Ascending aorta (tissue), 2 donors: ENCODE measurements at regions of chr15 and their contacts with region 1.

Region 1: DNA sequence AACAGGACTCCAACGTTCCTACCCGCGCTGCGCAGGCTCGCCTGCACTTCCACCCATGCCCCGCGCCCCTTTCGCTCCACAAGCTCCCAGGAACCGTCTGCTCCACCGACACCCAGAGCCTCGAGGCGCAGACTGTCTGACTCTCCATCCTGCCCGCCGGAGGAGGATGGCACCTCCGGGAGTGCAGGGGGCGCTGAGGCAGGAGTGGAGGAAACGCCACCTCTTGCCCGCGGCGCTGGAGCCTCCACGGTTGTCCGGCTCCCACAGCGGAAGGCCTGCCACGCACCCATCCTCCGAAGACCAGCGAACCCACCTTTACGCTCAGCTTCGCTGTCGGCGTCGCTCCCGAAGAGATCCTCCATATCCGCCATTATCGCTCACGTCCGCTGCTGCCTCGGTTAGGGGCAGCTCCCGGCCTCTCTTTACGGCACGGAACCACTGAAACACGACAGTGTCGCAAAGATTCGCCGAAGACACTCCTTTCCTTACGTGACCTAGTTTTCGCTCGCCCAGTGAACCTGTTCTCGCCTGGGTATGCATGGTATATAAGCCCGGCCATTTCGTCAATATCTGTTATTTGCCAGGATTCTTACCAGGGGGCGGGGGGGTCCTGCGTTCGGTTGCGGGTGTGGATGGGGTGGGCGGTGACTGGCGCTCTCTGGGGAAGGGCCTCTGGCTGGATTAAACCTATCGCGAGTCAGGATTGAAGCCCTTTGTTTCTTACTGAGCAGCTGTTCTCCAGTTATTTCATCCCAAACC is at the start of gene LEO1:
- DNase-seq: peak; percentile 63 to 95
- H3K4me3 ChIP-seq: peak within 1 kb of the TSS; percentile 69 to 84
- H3K27ac ChIP-seq: peak within 1 kb of the TSS; percentile 78 to 90
- H3K4me1 ChIP-seq: peaks cover 0 to 5% of the 10 kb centered on the region in 2 donors
- H3K27me3 ChIP-seq: no peaks in the 10 kb centered on the region
- CTCF ChIP-seq: peak in 2 of 3 experiments; percentile 48 to 56
- total RNA-seq, gene LEO1: 1.8 TPM

Region 2: DNA sequence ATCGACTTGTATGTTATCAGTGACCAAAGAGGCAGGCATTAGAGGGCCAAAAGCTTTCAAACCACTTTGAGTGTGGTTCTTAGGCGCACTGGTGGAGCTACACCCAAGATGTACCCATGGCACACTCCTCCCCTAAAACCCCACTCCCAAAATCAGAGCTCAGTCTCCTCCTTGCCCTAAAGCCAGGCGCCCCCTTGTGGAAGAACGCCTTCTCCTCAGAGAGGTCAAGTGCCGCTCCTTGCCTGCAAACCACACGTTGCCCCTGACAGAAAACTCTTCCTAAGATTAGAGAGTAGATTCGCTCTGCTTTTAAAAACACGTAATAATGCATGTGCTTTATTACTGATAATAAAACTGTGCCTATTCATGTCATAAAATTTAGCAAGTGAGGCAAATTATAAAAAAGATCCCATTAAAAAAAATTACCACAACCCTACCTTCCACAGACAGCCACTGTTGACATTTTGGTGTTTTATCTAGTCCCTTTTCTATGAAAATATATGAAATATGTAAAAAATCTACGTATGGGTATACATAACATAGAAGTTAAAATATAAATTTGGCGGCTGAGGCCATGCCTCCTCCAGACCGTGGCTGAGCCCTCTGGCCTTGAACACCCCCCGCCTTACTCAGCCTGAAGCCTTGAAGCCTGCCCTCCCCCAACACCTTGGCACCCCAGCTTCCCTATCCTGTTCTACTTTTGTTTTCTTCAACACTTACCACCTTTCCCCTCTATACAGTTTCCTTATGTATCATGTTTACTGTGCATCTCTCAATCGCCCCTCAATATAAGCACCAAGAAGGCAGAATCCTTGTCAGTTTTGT is 107.5 kb after region 1 on chr15:
- intact Hi-C with region 1: loop called (anchors 5 kb)
- DNase-seq: peak in 1 of 2 donors; percentile 82
- H3K4me3 ChIP-seq: no peak overlapping the region
- H3K27ac ChIP-seq: no peak overlapping the region
- H3K4me1 ChIP-seq: no peaks in the 10 kb centered on the region
- H3K27me3 ChIP-seq: no peaks in the 10 kb centered on the region
- CTCF ChIP-seq: peak; percentile 52 to 81 (median 62)

Region 3: DNA sequence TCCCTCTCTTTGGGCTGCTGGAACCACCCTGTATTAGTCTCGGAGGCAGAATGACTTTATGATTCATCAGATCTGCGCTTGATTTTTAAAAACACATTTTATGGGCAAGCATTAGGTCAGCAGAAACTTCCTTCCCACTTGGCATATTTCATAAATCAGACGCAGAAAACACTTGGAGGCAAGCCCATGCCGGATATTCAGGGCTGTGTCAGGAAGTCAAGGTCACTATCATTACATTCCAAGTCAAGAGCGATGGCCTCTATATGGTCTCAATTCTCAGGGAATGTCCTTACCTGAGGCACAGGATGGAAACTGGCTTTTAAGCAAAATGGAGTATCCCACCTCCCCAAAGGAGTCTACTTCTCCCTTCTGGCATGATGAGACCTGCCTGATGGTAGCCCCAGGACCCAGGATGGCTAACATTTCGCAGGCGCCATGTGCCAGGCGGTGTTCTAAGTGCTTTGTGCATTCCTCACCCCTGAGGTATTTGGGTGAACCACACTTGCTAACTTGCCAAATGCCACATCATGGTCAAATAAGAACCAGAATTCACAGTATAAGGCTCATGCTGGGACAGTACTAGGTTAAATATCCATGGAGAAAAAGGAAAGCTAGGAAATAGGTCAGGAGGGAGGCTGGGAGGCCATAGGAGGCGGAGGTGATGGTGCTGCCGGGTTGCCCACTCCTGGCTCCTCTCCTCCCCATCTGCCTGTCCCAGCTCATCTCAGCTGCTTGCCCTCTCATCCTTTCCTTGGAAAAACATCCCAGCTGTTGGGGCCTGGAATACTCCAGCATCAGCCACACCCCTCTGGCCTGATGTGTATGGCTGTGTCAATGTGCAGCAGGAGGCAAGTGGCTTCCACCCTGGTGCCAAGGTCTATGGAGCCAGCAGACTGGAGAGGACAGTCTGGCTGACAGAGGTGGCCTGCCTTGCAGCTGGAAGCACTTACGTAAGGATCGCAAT is 122.3 kb after region 1 on chr15:
- intact Hi-C with region 1: no loop called
- DNase-seq: peak in 1 of 2 donors; percentile 75
- H3K4me3 ChIP-seq: peak overlapping the region in 1 of 2 donors; percentile 7
- H3K27ac ChIP-seq: peak overlapping the region; percentile 77 to 78
- H3K4me1 ChIP-seq: peaks cover 9 to 19% of the 10 kb centered on the region in 2 donors
- H3K27me3 ChIP-seq: no peaks in the 10 kb centered on the region
- CTCF ChIP-seq: no peak

Region 4: DNA sequence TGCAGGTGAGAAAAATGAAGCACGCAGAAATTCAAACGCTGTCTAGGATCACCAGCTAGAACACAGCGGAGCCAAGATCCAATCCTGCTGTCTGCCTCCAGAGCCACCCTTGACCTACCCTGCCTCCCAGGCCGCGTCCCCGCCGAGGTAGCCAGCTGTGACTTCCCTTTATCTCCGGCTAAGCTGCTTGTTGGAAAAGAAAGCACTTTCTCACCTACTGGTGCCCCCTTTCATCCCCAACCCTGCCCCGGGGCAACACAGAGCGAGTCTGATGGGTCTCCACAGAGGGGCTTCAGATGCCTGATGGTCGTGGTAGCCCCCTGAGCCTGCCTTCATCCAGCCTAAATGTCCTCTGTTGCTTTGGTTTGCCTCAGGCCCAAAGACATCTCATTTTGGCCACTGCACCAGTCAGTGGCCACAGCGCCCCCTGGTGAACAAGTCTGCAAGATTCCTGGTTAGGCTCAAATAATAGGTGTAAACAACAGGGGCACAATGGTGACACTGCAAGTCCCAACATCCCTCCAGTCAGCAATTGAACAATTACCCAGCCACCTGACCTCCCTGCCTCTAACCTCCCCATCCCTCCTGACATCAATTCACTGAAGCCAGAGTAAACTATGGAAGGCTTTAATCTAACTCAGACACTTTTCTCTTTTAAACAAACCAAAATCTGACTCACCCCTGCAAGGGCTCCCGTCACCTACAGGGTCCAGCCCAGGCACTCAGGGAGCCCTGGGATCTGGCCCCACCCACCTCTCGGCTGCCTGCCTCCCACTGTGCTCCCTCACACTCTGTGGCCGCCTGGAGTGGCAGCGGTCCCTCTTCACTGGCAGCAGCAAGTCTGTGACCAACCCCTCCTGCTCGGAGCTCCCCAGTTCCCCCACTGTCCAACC is 168.3 kb after region 1 on chr15:
- intact Hi-C with region 1: loop called (anchors 10 kb)
- DNase-seq: peak in 1 of 2 donors; percentile 78
- H3K4me3 ChIP-seq: no peak overlapping the region
- H3K27ac ChIP-seq: no peak overlapping the region
- H3K4me1 ChIP-seq: peaks cover 0 to 4% of the 10 kb centered on the region in 2 donors
- H3K27me3 ChIP-seq: no peaks in the 10 kb centered on the region
- CTCF ChIP-seq: peak; percentile 66 to 75 (median 68)